ENCODE measurements at regions of chr7 and their contacts with region 1.

Region 1: DNA sequence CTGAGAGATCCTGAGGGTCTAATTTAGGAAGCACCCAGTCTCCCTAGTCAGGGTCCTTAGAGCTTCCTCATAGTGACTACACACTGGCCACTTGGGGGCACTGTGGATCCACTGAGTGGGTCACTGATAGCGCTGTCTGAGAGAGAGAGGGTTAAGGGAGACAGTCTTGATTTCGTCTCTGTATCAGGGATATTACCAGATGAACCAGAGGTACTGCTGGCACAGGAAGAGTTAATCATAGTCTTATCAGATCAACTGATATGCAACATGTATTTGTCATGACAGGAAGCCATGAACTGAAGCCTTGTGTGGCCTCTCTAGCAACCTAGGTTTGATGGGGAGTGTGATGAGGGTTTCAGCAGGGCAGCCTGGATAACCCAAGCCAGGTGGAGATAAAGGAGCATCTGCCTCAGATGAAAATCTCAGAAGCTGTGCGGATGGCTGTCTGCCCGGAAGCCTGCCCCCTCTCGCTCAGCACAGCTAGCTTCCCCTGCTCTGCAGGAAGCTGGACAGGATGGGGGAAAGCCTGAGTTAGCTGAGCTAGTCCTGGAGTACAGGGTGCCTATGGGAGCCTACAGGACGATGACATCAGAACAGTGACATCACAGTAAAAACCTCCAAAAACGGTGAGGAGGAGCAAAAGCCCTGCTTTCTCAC is 214.0 kb upstream of the PRSS1 start:
- DNase-seq: peak; percentile 83
- H3K4me3 Mint-ChIP-seq: peak overlapping the region; percentile 67
- H3K27ac Mint-ChIP-seq: peak overlapping the region; percentile 87
- H3K4me1 Mint-ChIP-seq: peaks cover 39% of the 10 kb centered on the region
- H3K27me3 Mint-ChIP-seq: no peaks in the 10 kb centered on the region

Region 2: GRCh38 chr7:142516038-142516501 is 19.2 kb before region 1 on chr7:
- CTCF ChIA-PET with region 1: interaction called, 15 read pairs
- DNase-seq: peak; percentile 50
- H3K4me3 Mint-ChIP-seq: no peak overlapping the region
- H3K27ac Mint-ChIP-seq: no peak overlapping the region
- H3K4me1 Mint-ChIP-seq: peaks cover 46% of the 10 kb centered on the region
- H3K27me3 Mint-ChIP-seq: peaks cover 6% of the 10 kb centered on the region

Region 3: GRCh38 chr7:142557971-142558582 is 22.8 kb after region 1 on chr7:
- CTCF ChIA-PET with region 1: interaction called, 28 read pairs
- DNase-seq: peak; percentile 70
- H3K4me3 Mint-ChIP-seq: peak overlapping the region; percentile 39
- H3K27ac Mint-ChIP-seq: no peak overlapping the region
- H3K4me1 Mint-ChIP-seq: peaks cover 17% of the 10 kb centered on the region
- H3K27me3 Mint-ChIP-seq: peaks cover 43% of the 10 kb centered on the region

Region 4: DNA sequence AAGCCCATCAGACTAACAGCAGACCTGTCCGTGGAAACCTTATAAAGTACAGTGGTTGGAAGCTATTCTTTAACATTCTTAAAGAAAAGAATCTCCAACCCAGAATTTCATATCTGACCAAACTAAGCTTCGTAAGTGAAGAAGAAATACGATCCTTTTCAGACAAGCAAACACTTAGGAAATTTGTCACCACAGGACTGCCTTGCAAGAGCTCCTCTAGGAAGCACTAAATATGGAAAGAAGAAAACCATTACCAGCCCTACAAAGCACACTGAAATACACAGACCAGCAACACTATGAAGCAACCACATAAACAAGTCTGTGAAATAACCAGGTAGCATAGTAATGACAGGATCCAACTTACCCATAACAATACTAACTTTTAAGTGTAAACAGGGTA is 36.3 kb after region 1 on chr7:
- CTCF ChIA-PET with region 1: no interaction called
- DNase-seq: no peak
- H3K4me3 Mint-ChIP-seq: no peak overlapping the region
- H3K27ac Mint-ChIP-seq: no peak overlapping the region
- H3K4me1 Mint-ChIP-seq: peaks cover 4% of the 10 kb centered on the region
- H3K27me3 Mint-ChIP-seq: peaks cover 13% of the 10 kb centered on the region

Region 5: GRCh38 chr7:142587578-142588191 is 52.4 kb after region 1 on chr7:
- CTCF ChIA-PET with region 1: interaction called, 42 read pairs
- DNase-seq: no peak
- H3K4me3 Mint-ChIP-seq: peak overlapping the region; percentile 18
- H3K27ac Mint-ChIP-seq: peak overlapping the region; percentile 45
- H3K4me1 Mint-ChIP-seq: peaks cover 9% of the 10 kb centered on the region
- H3K27me3 Mint-ChIP-seq: no peaks in the 10 kb centered on the region

Region 6: GRCh38 chr7:142626420-142627035 is 91.3 kb after region 1 on chr7:
- CTCF ChIA-PET with region 1: interaction called, 10 read pairs
- DNase-seq: peak; percentile 77
- H3K4me3 Mint-ChIP-seq: peak overlapping the region; percentile 74
- H3K27ac Mint-ChIP-seq: peak overlapping the region; percentile 90
- H3K4me1 Mint-ChIP-seq: peaks cover 4% of the 10 kb centered on the region
- H3K27me3 Mint-ChIP-seq: peaks cover 11% of the 10 kb centered on the region